ENCODE measurements at regions of chr3 and their contacts with region 1.

Region 1: DNA sequence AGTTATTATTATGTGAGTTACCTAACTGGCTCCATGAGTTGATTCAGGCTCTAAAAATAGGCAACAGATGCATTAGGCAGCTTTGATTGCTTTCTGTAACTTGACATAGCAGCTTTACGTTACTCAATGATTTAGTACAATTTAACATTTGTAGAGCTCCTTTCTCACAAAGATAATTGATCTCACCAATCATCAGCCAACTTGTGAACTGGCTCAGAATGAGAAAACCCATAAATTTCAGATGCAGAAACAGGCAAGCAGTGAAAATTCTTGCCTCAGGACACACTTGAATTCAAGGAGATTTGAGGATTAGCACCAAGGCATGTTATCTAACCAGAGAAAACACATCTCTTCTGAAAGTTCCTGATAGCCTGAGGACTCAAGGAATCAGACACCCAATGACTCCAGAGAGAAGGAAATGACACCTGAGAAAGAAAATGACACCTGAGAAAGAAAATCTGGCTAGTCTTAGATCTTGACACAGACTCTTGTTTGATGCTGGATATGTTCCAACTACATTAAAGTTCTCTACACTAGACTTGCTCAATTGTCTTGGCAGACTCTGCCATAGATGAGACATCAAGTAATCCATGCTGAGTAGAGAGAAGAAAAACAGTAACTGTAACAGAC is 315.1 kb upstream of the CBLB start:
- DNase-seq: peak; percentile 81
- ATAC-seq: peak; percentile 70
- H3K4me3 ChIP-seq: no peak overlapping the region
- H3K27ac ChIP-seq: peak overlapping the region; percentile 100
- H3K4me1 ChIP-seq: peaks cover 24% of the 10 kb centered on the region
- H3K27me3 ChIP-seq: no peaks in the 10 kb centered on the region
- CTCF ChIP-seq: no peak
- EP300 ChIP-seq: no peak
- POLR2A ChIP-seq: no peak
- RAD21 ChIP-seq: no peak

Region 2: DNA sequence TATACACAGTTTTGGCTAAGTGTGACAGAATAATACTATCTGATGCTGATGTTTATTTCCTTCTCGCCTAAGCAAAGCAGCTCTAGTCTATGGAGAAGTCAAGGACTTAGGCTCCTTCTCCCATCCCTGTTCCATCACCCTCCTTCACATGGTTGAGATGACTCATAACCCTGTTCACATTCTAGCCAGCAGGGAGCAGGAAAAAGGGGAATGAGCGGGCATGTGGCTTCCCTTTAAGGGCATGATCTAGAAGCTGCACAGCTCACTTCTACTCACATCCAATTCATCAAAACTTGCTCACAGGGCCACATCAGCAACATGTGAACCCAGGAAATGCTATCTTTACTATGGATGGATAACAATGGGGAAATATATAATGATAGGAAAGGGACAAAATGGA is 355.9 kb before region 1 on chr3:
- CTCF ChIA-PET with region 1: no interaction called
- POLR2A ChIA-PET with region 1: no interaction called
- RAD21 ChIA-PET with region 1: interaction called, 21 read pairs
- SMC1A ChIA-PET with region 1: interaction called, 17 read pairs
- in situ Hi-C with region 1: no loop called
- intact Hi-C with region 1: no loop called
- DNase-seq: no peak
- ATAC-seq: peak; percentile 23
- H3K4me3 ChIP-seq: no peak overlapping the region
- H3K27ac ChIP-seq: peak overlapping the region; percentile 81
- H3K4me1 ChIP-seq: peaks cover 44% of the 10 kb centered on the region
- H3K27me3 ChIP-seq: no peaks in the 10 kb centered on the region
- CTCF ChIP-seq: no peak
- EP300 ChIP-seq: no peak
- POLR2A ChIP-seq: no peak
- RAD21 ChIP-seq: 0 out of 2 replicates have a peak, but pooled peaks have one; percentile 6

Region 3: GRCh38 chr3:106068795-106069194 is 115.1 kb before region 1 on chr3:
- CTCF ChIA-PET with region 1: no interaction called
- POLR2A ChIA-PET with region 1: interaction called, 5 read pairs
- RAD21 ChIA-PET with region 1: interaction called, 34 read pairs
- SMC1A ChIA-PET with region 1: interaction called, 21 read pairs
- in situ Hi-C with region 1: no loop called
- intact Hi-C with region 1: loop called (anchors 5 kb)
- DNase-seq: no peak
- ATAC-seq: peak; percentile 91
- H3K4me3 ChIP-seq: no peak overlapping the region
- H3K27ac ChIP-seq: peak overlapping the region; percentile 20; the same call in 1 of the 2 replicates
- H3K4me1 ChIP-seq: no peaks in the 10 kb centered on the region
- H3K27me3 ChIP-seq: no peaks in the 10 kb centered on the region
- CTCF ChIP-seq: no peak
- EP300 ChIP-seq: no peak; a peak in 1 of 4 replicates
- POLR2A ChIP-seq: no peak
- RAD21 ChIP-seq: no peak

Region 4: GRCh38 chr3:106206146-106206545 is 22.3 kb after region 1 on chr3:
- CTCF ChIA-PET with region 1: interaction called, 4 read pairs
- POLR2A ChIA-PET with region 1: interaction called, 3 read pairs
- RAD21 ChIA-PET with region 1: interaction called, 20 read pairs
- SMC1A ChIA-PET with region 1: interaction called, 30 read pairs
- in situ Hi-C with region 1: no loop called
- intact Hi-C with region 1: loop called (anchors 2 kb)
- DNase-seq: peak; percentile 28
- ATAC-seq: peak; percentile 84
- H3K4me3 ChIP-seq: no peak overlapping the region
- H3K27ac ChIP-seq: peak overlapping the region; percentile 43
- H3K4me1 ChIP-seq: peaks cover 4% of the 10 kb centered on the region
- H3K27me3 ChIP-seq: no peaks in the 10 kb centered on the region
- CTCF ChIP-seq: no peak
- EP300 ChIP-seq: no peak
- POLR2A ChIP-seq: no peak
- RAD21 ChIP-seq: no peak

Region 5: GRCh38 chr3:106299300-106300098 is 115.6 kb after region 1 on chr3:
- CTCF ChIA-PET with region 1: interaction called, 4 read pairs
- POLR2A ChIA-PET with region 1: interaction called, 7 read pairs
- RAD21 ChIA-PET with region 1: interaction called, 58 read pairs
- SMC1A ChIA-PET with region 1: interaction called, 66 read pairs
- in situ Hi-C with region 1: loop called (anchors 5 kb)
- intact Hi-C with region 1: loop called (anchors 2 kb)
- DNase-seq: peak; percentile 90
- ATAC-seq: peak; percentile 71
- H3K4me3 ChIP-seq: no peak overlapping the region
- H3K27ac ChIP-seq: peak overlapping the region; percentile 92
- H3K4me1 ChIP-seq: peaks cover 47% of the 10 kb centered on the region
- H3K27me3 ChIP-seq: no peaks in the 10 kb centered on the region
- CTCF ChIP-seq: no peak
- EP300 ChIP-seq: peak; percentile 73 to 79; a peak in 2 of 4 replicates
- POLR2A ChIP-seq: no peak
- RAD21 ChIP-seq: 0 out of 2 replicates have a peak, but pooled peaks have one; percentile 6

Region 6: GRCh38 chr3:106355873-106356272 is 172.0 kb after region 1 on chr3:
- CTCF ChIA-PET with region 1: no interaction called
- POLR2A ChIA-PET with region 1: no interaction called
- RAD21 ChIA-PET with region 1: no interaction called
- SMC1A ChIA-PET with region 1: no interaction called
- in situ Hi-C with region 1: no loop called
- intact Hi-C with region 1: no loop called
- DNase-seq: no peak
- ATAC-seq: no peak
- H3K4me3 ChIP-seq: no peak overlapping the region
- H3K27ac ChIP-seq: no peak overlapping the region
- H3K4me1 ChIP-seq: no peaks in the 10 kb centered on the region
- H3K27me3 ChIP-seq: no peaks in the 10 kb centered on the region
- CTCF ChIP-seq: no peak
- EP300 ChIP-seq: no peak
- POLR2A ChIP-seq: no peak
- RAD21 ChIP-seq: no peak

Region 7: DNA sequence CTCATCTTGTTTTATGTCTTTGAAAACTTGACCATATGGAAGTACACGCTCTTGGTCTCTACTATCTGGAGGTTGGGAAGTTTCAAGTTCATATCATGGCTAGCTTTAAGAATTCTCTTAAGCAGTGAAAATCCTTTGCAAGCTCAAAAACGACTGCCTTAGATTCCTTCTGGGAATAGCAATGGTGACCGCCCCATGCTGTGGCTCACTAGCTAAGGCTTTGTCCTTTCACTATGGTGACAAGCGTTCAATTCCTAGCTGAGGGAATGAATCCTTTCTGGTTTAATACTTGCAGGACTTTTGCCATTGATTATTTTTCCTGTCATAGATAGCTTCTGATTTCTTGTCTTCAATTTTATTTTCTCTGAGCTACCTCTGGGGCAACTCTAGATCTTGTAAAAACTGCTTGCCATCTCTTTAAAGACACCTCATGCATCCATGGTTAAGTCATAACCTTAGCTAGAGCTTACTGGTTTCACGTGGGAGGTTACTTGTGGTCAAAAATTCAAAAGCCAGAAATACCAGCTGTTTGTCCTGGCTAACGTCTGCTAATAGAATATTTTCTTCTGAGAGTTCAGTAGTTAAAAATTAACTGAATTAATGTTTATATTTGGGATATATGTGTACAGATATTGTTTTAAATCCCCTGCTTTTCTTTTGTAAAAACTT is 358.4 kb after region 1 on chr3:
- CTCF ChIA-PET with region 1: no interaction called
- POLR2A ChIA-PET with region 1: no interaction called
- RAD21 ChIA-PET with region 1: no interaction called
- SMC1A ChIA-PET with region 1: no interaction called
- in situ Hi-C with region 1: no loop called
- intact Hi-C with region 1: no loop called
- DNase-seq: no peak
- ATAC-seq: peak; percentile 67
- H3K4me3 ChIP-seq: no peak overlapping the region
- H3K27ac ChIP-seq: no peak overlapping the region
- H3K4me1 ChIP-seq: no peaks in the 10 kb centered on the region
- H3K27me3 ChIP-seq: no peaks in the 10 kb centered on the region
- CTCF ChIP-seq: no peak
- EP300 ChIP-seq: no peak
- POLR2A ChIP-seq: no peak
- RAD21 ChIP-seq: no peak

Region 8: DNA sequence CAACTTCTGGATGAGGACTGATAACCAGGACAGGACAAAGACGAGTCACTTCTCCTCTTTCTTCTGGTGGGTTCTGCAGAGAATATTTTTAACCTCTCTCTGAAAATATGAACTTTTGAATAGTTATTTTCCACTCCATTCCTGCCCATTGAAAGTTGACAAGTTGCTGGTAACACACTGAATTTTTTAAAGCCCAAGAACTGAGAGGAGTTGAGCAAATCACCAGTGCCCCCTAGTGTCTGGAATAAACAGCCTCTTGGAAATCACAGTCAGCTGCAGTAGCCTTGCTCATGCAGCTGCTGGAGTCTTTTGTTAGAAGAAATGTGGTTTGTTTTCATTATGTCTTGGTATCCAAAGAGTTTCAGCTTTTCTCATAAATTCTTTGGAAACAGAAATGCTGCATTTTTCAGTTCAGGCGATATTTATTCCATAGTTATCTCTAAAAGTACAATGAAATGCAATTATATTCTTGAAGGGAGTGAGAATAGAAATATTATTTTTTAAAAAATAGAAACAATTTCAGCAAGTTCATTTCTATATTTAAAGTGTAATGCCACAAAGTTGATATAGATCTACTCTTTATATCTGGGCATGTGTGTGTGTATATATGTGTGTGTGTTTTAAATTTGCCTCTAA is 425.9 kb after region 1 on chr3:
- CTCF ChIA-PET with region 1: interaction called, 13 read pairs
- POLR2A ChIA-PET with region 1: no interaction called
- RAD21 ChIA-PET with region 1: interaction called, 8 read pairs
- SMC1A ChIA-PET with region 1: interaction called, 9 read pairs
- in situ Hi-C with region 1: no loop called
- intact Hi-C with region 1: loop called (anchors 1 kb)
- DNase-seq: peak; percentile 77
- ATAC-seq: peak; percentile 95
- H3K4me3 ChIP-seq: no peak overlapping the region
- H3K27ac ChIP-seq: peak overlapping the region; percentile 55
- H3K4me1 ChIP-seq: peaks cover 5% of the 10 kb centered on the region
- H3K27me3 ChIP-seq: no peaks in the 10 kb centered on the region
- CTCF ChIP-seq: peak; percentile 83 to 87 (median 86)
- EP300 ChIP-seq: no peak
- POLR2A ChIP-seq: no peak
- RAD21 ChIP-seq: peak; percentile 99